Activated B cell treated with CpG ODN at 0.5 μM for 24 hours (primary cell): ENCODE measurements at regions of chr18 and their contacts with region 1.

Region 1: GRCh38 chr18:63979409-63979920 is 9.6 kb downstream of the SERPINB8 start:
- DNase-seq: no peak
- ATAC-seq: peak; percentile 72
- H3K4me3 Mint-ChIP-seq: no peak overlapping the region
- H3K27ac Mint-ChIP-seq: peak overlapping the region; percentile 16
- H3K4me1 Mint-ChIP-seq: peaks cover 27% of the 10 kb centered on the region
- H3K27me3 Mint-ChIP-seq: no peaks in the 10 kb centered on the region
- CTCF ChIP-seq: peak; percentile 89

Region 2: DNA sequence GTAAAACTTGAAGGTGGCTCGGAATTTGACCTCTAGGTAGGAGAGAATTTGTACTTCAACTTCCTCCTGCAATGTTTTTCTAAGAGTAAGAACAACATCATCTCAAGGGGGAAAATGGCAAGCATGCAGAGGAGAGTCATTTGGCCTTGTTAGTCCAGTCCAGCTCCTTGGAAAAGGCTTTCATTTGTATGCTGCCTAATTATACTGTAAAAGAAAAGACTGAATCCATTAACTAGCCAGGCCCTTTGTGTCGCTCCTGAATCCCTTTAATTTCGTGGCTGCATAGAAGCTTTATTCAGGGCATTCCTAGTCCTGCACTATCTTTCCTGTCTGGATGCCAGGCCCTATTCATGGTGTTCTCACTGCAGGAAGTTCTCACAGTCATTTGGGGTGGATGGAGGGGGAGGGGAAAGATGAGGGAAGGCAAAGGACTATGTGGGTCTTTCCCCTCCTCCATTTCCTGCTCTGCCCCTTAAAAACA is 1228.1 kb before region 1 on chr18:
- CTCF ChIA-PET with region 1: no interaction called
- POLR2A ChIA-PET with region 1: no interaction called
- intact Hi-C with region 1: no loop called
- DNase-seq: no peak
- ATAC-seq: no peak
- H3K4me3 Mint-ChIP-seq: no peak overlapping the region
- H3K27ac Mint-ChIP-seq: no peak overlapping the region
- H3K4me1 Mint-ChIP-seq: peaks cover 13% of the 10 kb centered on the region
- H3K27me3 Mint-ChIP-seq: no peaks in the 10 kb centered on the region
- CTCF ChIP-seq: no peak

Region 3: DNA sequence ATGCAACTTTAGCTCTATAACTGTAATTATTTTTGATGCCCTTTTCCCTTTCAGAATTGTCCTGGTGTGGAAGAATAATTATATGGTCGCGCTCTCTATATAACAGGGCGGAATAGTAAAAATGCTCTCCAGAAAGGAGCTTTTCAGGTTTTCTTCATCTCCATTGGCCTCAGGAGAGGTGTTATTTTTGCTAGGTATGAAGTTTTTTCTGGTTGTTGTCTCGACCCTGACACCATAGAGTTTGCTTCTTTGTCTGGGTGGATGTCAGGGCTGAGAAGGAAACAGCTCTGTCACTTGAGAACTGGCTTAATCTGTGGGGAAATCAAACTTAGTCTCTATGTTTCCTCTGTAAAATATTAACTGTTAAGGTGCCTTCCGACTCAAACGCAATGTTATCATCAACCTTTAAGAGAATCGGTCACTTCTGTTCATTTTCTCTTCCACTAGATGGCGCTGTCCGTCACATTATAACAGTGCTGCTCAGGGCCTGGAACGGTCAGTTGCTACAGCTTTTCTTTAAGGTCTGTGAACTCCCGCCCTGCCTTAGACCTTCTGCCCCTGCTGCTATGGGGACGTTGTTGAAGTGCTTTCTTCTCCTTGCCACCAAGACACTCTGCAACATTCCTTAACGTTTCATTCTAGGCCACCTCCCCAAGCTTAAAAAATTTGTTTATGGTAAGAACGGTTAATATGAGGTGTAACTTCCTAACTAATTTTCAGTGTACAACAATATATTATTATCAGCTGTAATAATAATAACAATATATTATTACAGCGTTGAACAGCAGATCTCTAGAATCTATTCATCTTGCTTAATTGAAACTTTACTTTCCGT is 461.1 kb before region 1 on chr18:
- CTCF ChIA-PET with region 1: interaction called, 14 read pairs
- POLR2A ChIA-PET with region 1: no interaction called
- intact Hi-C with region 1: loop called (anchors 1 kb)
- DNase-seq: no peak
- ATAC-seq: peak; percentile 60
- H3K4me3 Mint-ChIP-seq: no peak overlapping the region
- H3K27ac Mint-ChIP-seq: no peak overlapping the region
- H3K4me1 Mint-ChIP-seq: peaks cover 3% of the 10 kb centered on the region
- H3K27me3 Mint-ChIP-seq: peaks cover 9% of the 10 kb centered on the region
- CTCF ChIP-seq: no peak

Region 4: DNA sequence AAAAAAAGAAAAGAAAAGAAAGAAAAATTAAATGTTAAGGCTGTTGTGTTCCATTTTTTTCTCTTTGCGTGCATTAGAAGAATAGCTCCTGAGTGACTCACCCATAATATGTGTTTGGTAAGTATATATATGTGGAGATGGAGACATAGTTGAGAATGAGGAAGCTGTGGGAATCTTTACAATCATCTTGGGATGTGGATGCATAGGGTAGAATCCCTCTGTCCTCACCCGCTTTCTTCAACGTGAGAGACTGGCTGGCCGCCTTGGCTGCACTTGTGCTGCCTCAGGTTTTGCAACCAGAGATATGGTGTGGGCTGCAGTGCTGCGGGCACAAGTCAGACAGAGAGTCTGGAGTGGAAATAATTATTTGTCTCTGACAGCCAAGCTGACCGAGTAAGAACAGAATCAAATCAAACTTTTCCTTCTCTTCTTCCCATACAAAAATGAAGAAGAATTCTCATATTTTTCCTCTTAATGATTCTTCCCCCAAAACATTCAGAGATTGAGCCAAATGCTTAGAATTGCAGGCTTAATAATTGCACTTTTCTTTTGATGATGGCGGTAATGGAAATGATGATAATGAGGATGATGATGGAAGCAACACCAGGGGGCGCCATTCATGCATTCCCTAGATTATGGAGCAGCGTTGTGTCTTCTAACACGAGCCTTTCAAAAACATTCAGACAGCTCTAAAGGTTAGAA is 155.8 kb before region 1 on chr18:
- CTCF ChIA-PET with region 1: no interaction called
- POLR2A ChIA-PET with region 1: no interaction called
- intact Hi-C with region 1: loop called (anchors 1 kb)
- DNase-seq: no peak
- ATAC-seq: no peak
- H3K4me3 Mint-ChIP-seq: no peak overlapping the region
- H3K27ac Mint-ChIP-seq: no peak overlapping the region
- H3K4me1 Mint-ChIP-seq: no peaks in the 10 kb centered on the region
- H3K27me3 Mint-ChIP-seq: peaks cover 6% of the 10 kb centered on the region
- CTCF ChIP-seq: no peak

Region 5: DNA sequence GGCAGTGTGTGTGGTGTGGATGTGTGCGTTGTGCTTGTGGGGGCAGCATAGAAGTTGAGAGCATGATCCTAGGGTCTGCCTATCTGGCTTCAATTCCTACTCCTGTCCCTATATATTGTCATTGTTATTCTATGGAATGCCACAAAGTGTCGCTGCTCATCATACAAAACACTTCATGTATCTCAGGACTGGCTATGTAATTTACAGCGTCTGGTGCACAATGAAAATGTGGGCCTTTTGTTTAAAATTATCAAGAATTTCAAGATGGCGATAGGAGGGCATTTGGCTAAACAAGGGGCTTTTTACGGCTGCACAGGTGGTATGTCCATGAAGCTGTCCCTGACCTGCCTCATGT is 88.5 kb before region 1 on chr18:
- CTCF ChIA-PET with region 1: no interaction called
- POLR2A ChIA-PET with region 1: no interaction called
- intact Hi-C with region 1: loop called (anchors 1 kb)
- DNase-seq: no peak
- ATAC-seq: no peak
- H3K4me3 Mint-ChIP-seq: no peak overlapping the region
- H3K27ac Mint-ChIP-seq: no peak overlapping the region
- H3K4me1 Mint-ChIP-seq: no peaks in the 10 kb centered on the region
- H3K27me3 Mint-ChIP-seq: peaks cover 9% of the 10 kb centered on the region
- CTCF ChIP-seq: no peak

Region 6: GRCh38 chr18:63949068-63949737 is 30.3 kb before region 1 on chr18 and contains the start of gene HMSD:
- CTCF ChIA-PET with region 1: no interaction called
- POLR2A ChIA-PET with region 1: no interaction called
- intact Hi-C with region 1: no loop called
- DNase-seq: peak; percentile 46
- ATAC-seq: peak; percentile 98
- H3K4me3 Mint-ChIP-seq: peak within 1 kb of the TSS; percentile 77
- H3K27ac Mint-ChIP-seq: no peak within 1 kb of the TSS
- H3K4me1 Mint-ChIP-seq: peaks cover 19% of the 10 kb centered on the region
- H3K27me3 Mint-ChIP-seq: peaks cover 13% of the 10 kb centered on the region
- CTCF ChIP-seq: no peak
- total RNA-seq, gene HMSD: 0.11 and 1.2 TPM in 2 replicates

Region 7: DNA sequence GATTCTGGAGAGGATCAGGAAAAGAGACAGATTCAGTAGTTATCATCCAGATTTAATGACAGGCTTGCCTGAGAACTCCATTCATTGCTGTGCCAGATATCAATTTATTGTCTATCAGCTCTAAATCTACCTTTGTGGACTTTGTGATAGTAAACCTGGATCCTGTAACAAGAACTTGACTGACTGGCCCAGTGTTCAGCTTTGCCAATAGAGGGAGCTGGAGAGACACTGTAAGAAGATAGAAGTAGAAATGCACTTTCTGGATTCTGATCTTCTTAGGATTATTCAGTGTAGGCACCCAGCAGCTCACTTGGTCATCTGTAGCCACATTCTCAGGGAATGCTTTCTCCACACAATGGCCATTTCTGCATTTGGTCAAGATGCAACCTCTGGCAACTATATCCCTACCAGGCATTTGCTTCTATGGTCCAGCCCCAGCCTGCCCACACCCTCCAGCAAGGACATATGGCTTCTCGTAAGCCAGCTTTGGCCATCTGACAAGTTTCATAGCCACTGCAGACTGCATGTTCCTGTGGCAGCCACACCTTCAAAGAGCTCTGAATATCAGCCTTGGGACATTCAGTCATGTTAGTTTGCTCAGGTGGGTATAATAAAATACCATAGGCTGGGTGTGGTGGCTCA is 15.7 kb before region 1 on chr18:
- CTCF ChIA-PET with region 1: interaction called, 20 read pairs
- POLR2A ChIA-PET with region 1: no interaction called
- intact Hi-C with region 1: loop called (anchors 1 kb)
- DNase-seq: no peak
- ATAC-seq: peak; percentile 83
- H3K4me3 Mint-ChIP-seq: no peak overlapping the region
- H3K27ac Mint-ChIP-seq: no peak overlapping the region
- H3K4me1 Mint-ChIP-seq: no peaks in the 10 kb centered on the region
- H3K27me3 Mint-ChIP-seq: peaks cover 13% of the 10 kb centered on the region
- CTCF ChIP-seq: no peak

Region 8: GRCh38 chr18:64055019-64055418 is 75.6 kb after region 1 on chr18:
- CTCF ChIA-PET with region 1: no interaction called
- POLR2A ChIA-PET with region 1: no interaction called
- intact Hi-C with region 1: no loop called
- DNase-seq: no peak
- ATAC-seq: no peak
- H3K4me3 Mint-ChIP-seq: no peak overlapping the region
- H3K27ac Mint-ChIP-seq: no peak overlapping the region
- H3K4me1 Mint-ChIP-seq: no peaks in the 10 kb centered on the region
- H3K27me3 Mint-ChIP-seq: peaks cover 3% of the 10 kb centered on the region
- CTCF ChIP-seq: no peak

Region 9: GRCh38 chr18:64791211-64791610 is 811.7 kb after region 1 on chr18:
- CTCF ChIA-PET with region 1: no interaction called
- POLR2A ChIA-PET with region 1: no interaction called
- intact Hi-C with region 1: no loop called
- DNase-seq: no peak
- ATAC-seq: no peak
- H3K4me3 Mint-ChIP-seq: no peak overlapping the region
- H3K27ac Mint-ChIP-seq: no peak overlapping the region
- H3K4me1 Mint-ChIP-seq: no peaks in the 10 kb centered on the region
- H3K27me3 Mint-ChIP-seq: no peaks in the 10 kb centered on the region
- CTCF ChIP-seq: no peak